Ascending aorta (tissue), 2 donors: ENCODE measurements at regions of chr4 and their contacts with region 1.

Region 1: DNA sequence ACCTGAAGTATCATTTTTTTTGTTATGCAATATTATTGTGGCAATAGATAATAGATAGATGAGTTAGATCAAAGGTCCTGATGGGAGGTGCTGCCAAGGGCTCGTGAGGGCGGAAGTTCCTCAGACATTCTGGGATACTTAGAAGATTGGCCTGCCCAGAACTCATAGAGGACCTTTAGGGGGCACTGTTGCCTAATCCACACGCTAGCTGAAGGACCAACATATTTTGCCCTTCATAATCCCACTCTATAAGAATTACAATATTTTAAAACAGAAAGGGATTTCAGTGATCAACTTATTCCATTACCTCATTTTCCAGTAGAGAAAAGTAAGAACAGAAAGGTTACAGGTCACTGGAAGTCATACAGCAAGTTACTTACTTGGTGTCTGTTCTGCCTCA is 22.9 kb upstream of the COX7B2 start:
- DNase-seq: no peak
- H3K4me3 ChIP-seq: no peak overlapping the region
- H3K27ac ChIP-seq: no peak overlapping the region
- H3K4me1 ChIP-seq: no peaks in the 10 kb centered on the region
- H3K27me3 ChIP-seq: no peaks in the 10 kb centered on the region
- CTCF ChIP-seq: peak in 2 of 3 experiments; percentile 29 to 53

Region 2: DNA sequence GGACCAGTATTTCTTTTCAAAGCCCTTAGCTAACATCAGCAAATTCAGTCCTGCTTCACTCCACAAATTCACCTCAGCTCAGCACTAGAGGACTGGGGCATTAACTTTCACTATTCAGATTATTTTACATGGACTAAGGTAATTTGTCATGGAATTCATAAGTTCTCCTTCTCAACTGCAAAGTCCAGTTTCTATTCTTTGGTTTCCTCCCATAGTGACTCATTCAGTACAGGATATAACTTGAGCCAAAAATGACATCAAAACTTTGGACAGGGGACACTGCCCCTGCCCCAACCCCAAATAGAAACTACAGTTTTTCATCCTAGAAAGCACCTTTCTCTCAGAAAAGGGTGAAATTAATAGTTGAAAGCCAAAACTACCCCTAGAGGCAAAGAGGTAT is 75.6 kb before region 1 on chr4:
- intact Hi-C with region 1: no loop called
- DNase-seq: no peak
- H3K4me3 ChIP-seq: no peak overlapping the region
- H3K27ac ChIP-seq: peak overlapping the region in 1 of 2 donors; percentile 3
- H3K4me1 ChIP-seq: peaks cover 5 to 11% of the 10 kb centered on the region in 2 donors
- H3K27me3 ChIP-seq: no peaks in the 10 kb centered on the region
- CTCF ChIP-seq: no peak

Region 3: DNA sequence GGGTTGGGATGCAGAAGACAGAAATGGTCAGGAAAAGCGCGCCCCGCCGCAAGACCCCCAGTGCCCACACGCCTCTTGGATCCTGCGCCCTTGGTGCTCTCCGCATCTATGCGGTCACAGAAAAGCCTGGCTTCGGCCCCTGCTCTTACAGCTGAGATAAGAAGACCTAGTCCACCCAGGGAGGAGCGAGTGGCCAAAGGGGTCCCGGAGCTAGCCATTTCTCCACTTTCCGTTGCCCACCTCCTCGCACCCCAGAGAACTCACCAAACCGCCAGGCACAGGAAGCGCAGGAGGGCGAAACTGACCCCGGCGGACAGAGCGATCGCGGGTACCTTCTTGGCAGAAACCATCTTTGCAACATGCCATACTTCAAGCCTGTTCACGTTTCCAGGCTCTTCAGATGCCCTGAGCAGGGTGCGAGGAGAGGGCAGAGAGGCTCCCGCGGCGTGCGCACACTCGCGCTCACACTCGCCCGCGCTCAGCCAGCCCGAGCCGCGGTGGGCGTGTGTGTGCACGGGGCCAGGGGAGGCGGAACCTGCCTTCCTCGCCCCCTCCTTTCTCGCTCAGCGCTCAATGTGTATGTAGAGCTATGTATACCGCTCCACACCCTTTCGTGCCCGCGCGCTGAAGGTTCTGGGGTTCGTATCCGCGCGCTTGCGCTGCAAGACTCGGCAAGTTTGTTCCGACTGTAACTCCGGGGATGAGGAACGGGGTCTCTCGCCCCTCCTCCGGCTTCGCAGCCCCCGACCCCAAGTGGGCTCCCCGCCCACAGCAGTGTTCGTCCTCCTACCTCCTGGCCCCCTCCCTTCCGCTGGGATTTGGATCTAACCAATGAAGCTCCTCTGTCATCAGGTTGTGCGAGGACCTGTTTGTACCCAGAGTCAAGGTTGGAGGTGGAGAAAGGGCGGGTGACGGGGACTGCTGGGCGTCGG is 61.4 kb after region 1 on chr4 and contains the start of gene GABRA4:
- intact Hi-C with region 1: loop called (anchors 10 kb)
- DNase-seq: no peak
- H3K4me3 ChIP-seq: peak within 1 kb of the TSS; percentile 32 to 49
- H3K27ac ChIP-seq: no peak within 1 kb of the TSS
- H3K4me1 ChIP-seq: no peaks in the 10 kb centered on the region
- H3K27me3 ChIP-seq: no peaks in the 10 kb centered on the region
- CTCF ChIP-seq: no peak
- total RNA-seq, gene GABRA4: 0.11 TPM

Region 4: DNA sequence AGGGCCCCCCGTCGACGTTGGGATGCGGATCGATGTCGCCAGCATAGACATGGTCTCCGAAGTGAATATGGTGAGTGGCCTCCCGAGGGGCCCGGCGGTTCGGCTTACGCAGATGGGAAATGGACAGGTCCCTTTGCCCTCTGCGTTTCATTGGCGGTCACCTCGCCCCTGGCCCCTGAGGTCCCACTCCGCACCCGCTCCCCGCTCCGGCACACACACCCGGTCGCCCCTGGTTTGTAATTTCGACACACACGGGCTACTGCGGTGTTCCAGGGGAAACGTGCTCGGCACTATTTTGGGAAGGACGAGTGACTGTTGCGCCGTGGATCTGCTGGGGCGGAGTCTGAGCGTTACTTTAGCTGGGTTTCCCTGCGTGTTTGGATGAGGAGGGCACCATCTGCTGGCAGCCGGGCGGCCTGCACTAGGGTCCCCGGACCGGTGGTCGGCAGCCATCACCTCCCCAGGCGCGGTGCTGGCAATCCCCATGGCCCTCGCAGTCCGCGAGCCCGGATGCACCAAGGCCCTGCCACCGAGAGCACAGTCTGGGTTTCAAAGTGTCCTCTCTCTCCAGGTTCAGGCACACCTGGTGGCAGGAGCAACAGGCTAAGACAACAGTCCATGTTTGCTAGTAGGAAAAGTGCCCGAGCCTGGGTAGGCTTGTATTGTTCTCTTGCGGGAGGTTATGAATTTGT is 100.6 kb after region 1 on chr4:
- intact Hi-C with region 1: loop called (anchors 1 kb)
- DNase-seq: peak in 1 of 2 donors; percentile 65
- H3K4me3 ChIP-seq: peak overlapping the region; percentile 40 to 48
- H3K27ac ChIP-seq: no peak overlapping the region
- H3K4me1 ChIP-seq: peaks cover 0 to 2% of the 10 kb centered on the region in 2 donors
- H3K27me3 ChIP-seq: no peaks in the 10 kb centered on the region
- CTCF ChIP-seq: peak; percentile 7 to 50 (median 44)

Region 5: GRCh38 chr4:47122592-47123291 is 190.8 kb after region 1 on chr4:
- intact Hi-C with region 1: loop called (anchors 5 kb)
- DNase-seq: peak in 1 of 2 donors; percentile 65
- H3K4me3 ChIP-seq: no peak overlapping the region
- H3K27ac ChIP-seq: no peak overlapping the region
- H3K4me1 ChIP-seq: no peaks in the 10 kb centered on the region
- H3K27me3 ChIP-seq: no peaks in the 10 kb centered on the region
- CTCF ChIP-seq: peak; percentile 17 to 70 (median 61)